ENCODE measurements at regions of chr11 and their contacts with region 1.

Region 1: GRCh38 chr11:3807909-3808860 is at the start of gene PGAP2:
- DNase-seq: peak; percentile 65
- H3K4me3 Mint-ChIP-seq: peak within 1 kb of the TSS; percentile 85
- H3K27ac Mint-ChIP-seq: peak within 1 kb of the TSS; percentile 64
- H3K4me1 Mint-ChIP-seq: peaks cover 20% of the 10 kb centered on the region
- H3K27me3 Mint-ChIP-seq: no peaks in the 10 kb centered on the region
- total RNA-seq, gene PGAP2: 18.0 to 19.0 TPM

Region 2: DNA sequence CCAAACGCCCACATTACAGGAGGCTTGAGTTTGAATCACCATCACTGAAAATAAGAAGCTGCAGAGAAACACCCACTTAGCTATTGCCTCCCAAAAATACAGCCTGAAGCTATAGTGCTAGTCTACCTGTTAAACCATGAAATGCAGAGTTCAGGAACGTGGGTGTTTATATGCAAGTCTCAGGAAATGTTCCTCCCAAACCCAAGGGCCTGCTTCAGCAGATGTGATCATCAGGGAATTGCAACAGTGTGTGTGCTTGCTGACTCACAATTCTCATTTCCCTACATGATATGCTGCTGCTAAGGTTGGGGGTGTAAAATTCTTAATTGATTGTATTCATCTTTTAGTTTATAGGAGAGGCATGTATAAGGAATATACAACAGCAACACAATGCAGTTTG is 60.5 kb before region 1 on chr11:
- CTCF ChIA-PET with region 1: interaction called, 10 read pairs
- POLR2A ChIA-PET with region 1: interaction called, 4 read pairs
- DNase-seq: no peak
- H3K4me3 Mint-ChIP-seq: no peak overlapping the region
- H3K27ac Mint-ChIP-seq: no peak overlapping the region
- H3K4me1 Mint-ChIP-seq: no peaks in the 10 kb centered on the region
- H3K27me3 Mint-ChIP-seq: no peaks in the 10 kb centered on the region

Region 3: DNA sequence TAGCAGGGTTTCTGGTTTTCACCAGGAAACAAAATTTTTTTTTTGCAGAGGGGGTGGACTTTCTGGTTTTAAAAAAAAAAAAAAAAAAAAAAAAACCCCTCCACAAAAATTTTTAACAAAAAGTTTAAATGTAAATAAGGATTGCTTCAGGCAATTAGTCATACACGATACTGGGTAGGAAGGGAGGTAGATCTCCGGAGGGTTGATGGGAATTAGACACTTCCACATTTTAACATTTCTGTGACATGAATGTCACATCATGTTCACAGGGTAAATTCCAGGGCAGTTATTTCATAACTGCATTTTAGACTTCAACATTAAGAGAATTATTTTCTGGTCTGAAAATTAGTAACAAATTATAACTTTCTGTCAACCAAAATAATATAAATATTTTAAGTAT is 26.8 kb before region 1 on chr11:
- CTCF ChIA-PET with region 1: interaction called, 48 read pairs
- POLR2A ChIA-PET with region 1: interaction called, 19 read pairs
- DNase-seq: no peak
- H3K4me3 Mint-ChIP-seq: no peak overlapping the region
- H3K27ac Mint-ChIP-seq: peak overlapping the region; percentile 12
- H3K4me1 Mint-ChIP-seq: peaks cover 50% of the 10 kb centered on the region
- H3K27me3 Mint-ChIP-seq: no peaks in the 10 kb centered on the region

Region 4: DNA sequence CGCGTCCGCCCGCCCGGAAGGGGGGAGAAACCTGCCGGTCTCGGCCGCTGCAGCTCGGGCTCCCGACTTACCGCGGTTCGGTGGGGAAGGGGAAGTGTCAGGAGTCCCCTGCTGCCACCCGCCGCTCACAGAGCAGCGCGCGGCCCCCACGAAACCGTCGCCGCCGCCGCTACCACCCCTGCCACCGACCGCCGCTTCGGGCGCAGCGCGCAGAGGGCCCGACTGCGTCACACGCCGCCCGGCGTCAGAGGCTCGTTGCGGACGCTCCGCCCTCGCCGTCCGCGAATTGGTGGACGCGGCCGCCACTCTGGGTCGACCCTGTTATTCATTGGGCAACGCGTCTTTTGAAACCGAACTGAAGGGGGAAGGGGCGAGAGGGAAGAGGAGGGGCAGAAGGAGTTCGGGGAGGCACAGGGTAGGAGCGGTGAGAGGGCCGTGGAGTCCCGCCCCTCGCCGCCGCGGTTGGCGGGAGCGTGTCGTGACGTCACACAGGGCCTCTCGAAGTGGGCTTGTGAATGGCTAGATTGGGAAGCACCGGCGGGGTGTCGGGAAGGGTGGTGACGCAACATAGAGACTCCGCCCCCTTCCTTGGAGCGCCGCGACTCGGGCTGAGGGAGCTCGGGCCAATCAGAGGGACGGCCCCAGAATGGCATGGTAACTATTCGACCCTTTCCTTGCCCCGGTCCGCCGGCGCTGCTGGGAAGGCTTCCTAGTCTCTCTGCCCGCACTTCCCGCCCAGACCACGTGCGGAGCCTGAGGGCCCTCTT is 10.7 kb before region 1 on chr11 and contains the start of gene NUP98:
- CTCF ChIA-PET with region 1: interaction called, 57 read pairs
- POLR2A ChIA-PET with region 1: interaction called, 27 read pairs
- DNase-seq: peak; percentile 100
- H3K4me3 Mint-ChIP-seq: peak within 1 kb of the TSS; percentile 93
- H3K27ac Mint-ChIP-seq: peak within 1 kb of the TSS; percentile 92
- H3K4me1 Mint-ChIP-seq: peaks cover 51% of the 10 kb centered on the region
- H3K27me3 Mint-ChIP-seq: no peaks in the 10 kb centered on the region
- total RNA-seq, gene NUP98: 93.9 to 95.2 TPM

Region 5: GRCh38 chr11:3834664-3835461 is 26.7 kb after region 1 on chr11:
- CTCF ChIA-PET with region 1: interaction called, 24 read pairs
- POLR2A ChIA-PET with region 1: interaction called, 58 read pairs
- DNase-seq: peak; percentile 30
- H3K4me3 Mint-ChIP-seq: peak overlapping the region; percentile 64
- H3K27ac Mint-ChIP-seq: peak overlapping the region; percentile 62
- H3K4me1 Mint-ChIP-seq: peaks cover 93% of the 10 kb centered on the region
- H3K27me3 Mint-ChIP-seq: no peaks in the 10 kb centered on the region

Region 6: DNA sequence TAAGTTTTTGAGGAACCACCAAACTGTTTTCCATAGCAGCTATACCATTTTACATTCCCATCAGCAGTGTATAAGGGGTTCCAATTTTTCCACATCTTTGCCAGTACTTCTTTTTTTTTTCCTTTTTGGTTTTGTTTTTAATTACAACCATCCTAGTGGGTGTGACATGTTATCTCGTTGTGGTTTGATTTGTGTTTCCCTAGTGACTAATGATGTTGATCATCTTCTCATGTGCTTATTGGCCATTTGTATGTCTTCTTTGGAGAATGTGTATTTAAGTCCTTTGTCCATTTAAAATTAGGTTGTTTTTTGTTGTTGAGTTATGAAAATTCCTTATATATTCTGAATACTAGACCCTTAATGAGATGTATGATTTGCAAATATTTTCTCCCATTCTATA is 106.6 kb after region 1 on chr11:
- CTCF ChIA-PET with region 1: no interaction called
- POLR2A ChIA-PET with region 1: no interaction called
- DNase-seq: no peak
- H3K4me3 Mint-ChIP-seq: no peak overlapping the region
- H3K27ac Mint-ChIP-seq: no peak overlapping the region
- H3K4me1 Mint-ChIP-seq: peaks cover 57% of the 10 kb centered on the region
- H3K27me3 Mint-ChIP-seq: no peaks in the 10 kb centered on the region